H1 (cell line): ENCODE measurements at regions of chr15 and their contacts with region 1.

Region 1: DNA sequence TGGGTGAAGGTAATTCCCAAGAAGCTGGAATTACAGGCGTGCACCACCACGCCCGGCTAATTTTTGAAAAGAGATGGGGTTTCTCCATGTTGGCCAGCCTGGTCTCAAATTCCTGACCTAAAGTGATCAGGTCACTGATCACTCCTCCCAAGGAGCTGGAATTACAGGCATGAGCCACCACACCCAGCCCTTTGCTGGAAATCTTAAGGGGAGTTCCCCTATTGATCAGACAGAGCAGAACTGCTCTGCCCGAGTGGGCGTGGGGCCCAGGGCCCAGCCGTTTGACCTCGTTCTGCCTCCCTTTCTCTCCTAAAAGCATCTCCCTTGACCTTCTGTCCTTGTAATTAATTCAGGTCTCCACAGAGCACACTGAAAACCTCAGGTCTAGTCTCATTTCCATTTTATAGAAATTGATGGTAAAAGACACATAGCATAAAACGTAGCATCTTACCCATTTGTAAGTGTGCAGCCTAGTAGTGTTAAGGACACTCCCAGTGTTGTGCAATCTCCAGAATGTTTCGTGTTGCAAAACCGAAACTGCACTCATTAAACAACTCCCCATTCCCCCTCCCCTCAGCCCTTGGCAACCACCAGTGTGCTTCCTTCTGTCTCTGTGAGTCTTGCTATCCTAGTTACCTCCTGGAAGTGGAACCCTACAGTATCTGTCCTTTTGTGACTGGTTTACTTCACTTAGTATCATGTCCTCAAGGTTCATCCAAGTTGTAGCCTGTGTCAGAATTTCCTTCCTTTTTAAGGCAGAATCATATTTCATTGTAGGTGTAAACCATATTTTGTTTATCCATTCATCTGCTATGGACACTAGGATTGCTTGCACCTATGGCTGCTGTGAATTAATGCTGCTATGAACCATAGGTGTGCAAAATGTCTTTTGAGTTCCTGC is 89.4 kb downstream of the SLCO3A1 start:
- DNase-seq: no peak
- H3K4me3 ChIP-seq: no peak overlapping the region
- H3K27ac ChIP-seq: no peak overlapping the region
- H3K4me1 ChIP-seq: peaks cover 16 to 28% (median 22%) of the 10 kb centered on the region in 4 experiments
- H3K27me3 ChIP-seq: no peaks in the 10 kb centered on the region
- CTCF ChIP-seq: no peak
- EP300 ChIP-seq: no peak
- POLR2A ChIP-seq: no peak
- RAD21 ChIP-seq: no peak

Region 2: DNA sequence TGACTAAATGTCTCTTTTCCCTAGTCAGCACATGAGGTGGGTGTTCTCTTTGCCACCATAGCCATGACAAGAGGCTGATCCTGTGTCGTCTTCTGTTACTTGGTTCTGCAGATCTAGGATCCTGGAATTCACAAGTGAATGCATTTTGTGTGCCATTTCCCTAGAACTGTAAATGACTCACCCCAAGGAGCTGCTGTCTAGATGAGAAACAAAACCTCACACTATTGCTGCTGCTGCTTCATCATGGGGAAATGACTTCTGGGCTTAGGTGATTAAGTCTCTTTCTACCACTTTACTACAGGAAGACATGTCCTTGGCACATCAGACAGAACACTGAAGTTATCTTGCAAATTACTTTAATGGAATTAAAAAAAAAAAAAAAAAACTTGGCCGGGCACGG is 34.5 kb before region 1 on chr15:
- CTCF ChIA-PET with region 1: interaction called, 10 read pairs
- POLR2A ChIA-PET with region 1: no interaction called
- DNase-seq: no peak
- H3K4me3 ChIP-seq: no peak overlapping the region
- H3K27ac ChIP-seq: no peak overlapping the region
- H3K4me1 ChIP-seq: peaks cover 0 to 2% (median 0%) of the 10 kb centered on the region in 4 experiments; a peak in 2 of 7 replicates
- H3K27me3 ChIP-seq: 0 out of 7 replicates have a peak, but pooled peaks cover 0 to 2% (median 0%) of the 10 kb centered on the region in 4 experiments
- CTCF ChIP-seq: no peak
- EP300 ChIP-seq: no peak
- POLR2A ChIP-seq: no peak
- RAD21 ChIP-seq: no peak

Region 3: GRCh38 chr15:91926908-91927270 is 16.0 kb before region 1 on chr15:
- CTCF ChIA-PET with region 1: interaction called, 16 read pairs
- POLR2A ChIA-PET with region 1: interaction called, 4 read pairs
- DNase-seq: no peak
- H3K4me3 ChIP-seq: peak overlapping the region in 1 of 4 experiments; percentile 14; a peak in 1 of 8 replicates
- H3K27ac ChIP-seq: no peak overlapping the region
- H3K4me1 ChIP-seq: peaks cover 11 to 41% (median 31%) of the 10 kb centered on the region in 4 experiments
- H3K27me3 ChIP-seq: no peaks in the 10 kb centered on the region; a peak in 1 of 7 replicates
- CTCF ChIP-seq: no peak
- EP300 ChIP-seq: no peak
- POLR2A ChIP-seq: no peak
- RAD21 ChIP-seq: no peak